Left cardiac atrium (tissue), 4 donors: ENCODE measurements at regions of chr6 and their contacts with region 1.

Region 1: DNA sequence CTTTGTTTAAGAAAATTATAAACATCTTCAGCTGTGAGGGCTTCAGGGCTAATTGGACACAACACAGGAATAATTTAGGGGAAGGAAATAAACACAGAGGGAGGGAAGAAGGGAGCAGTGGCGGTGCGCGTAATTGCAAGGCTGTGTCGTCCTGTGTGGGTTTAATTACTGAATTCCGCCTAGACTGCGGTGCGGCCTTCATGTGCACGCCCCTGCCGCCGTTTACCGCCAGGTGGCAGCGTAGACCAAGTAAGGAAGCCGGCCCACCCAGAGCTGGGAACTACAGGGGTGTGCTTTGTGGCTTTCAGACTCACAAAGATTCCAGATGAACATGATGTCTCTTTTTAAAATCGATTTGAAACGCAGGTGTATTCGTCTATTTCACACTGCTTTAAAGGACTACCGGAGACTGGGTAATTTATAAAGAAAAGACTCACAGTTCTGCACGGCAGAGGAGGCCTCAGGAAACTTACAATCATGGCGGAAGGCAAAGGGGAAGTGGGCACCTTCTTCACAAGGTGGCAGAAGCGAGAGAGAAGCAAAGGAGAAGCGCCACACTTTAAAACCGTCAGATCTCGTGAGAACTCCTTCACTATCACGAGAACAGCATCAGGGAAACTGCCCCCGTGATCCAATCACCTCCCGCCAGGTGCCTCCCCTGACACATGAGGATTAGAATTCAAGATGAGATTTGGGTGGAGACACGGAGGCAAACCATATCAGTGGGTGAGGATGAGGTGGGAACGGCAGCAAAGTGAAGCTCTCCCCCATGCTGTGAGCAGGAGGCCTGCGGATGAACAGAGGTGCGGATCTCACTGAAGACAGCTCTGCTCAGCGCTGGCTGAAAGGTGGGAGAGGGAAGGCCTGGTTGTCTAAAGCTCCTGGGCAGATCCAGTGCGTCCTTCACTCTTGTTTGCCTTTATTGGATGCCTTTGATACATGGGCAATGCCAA is 222.0 kb upstream of the PDE10A start:
- DNase-seq: peak; percentile 84
- ATAC-seq: peak; percentile 86 to 94

Region 2: GRCh38 chr6:165819394-165819793 is 65.7 kb before region 1 on chr6:
- intact Hi-C with region 1: no loop called
- DNase-seq: no peak
- ATAC-seq: peak in 1 of 2 donors; percentile 62

Region 3: GRCh38 chr6:165987483-165988301 is 102.6 kb after region 1 on chr6:
- intact Hi-C with region 1: loop called in 1 of 2 experiments (anchors 10 kb)
- DNase-seq: peak; percentile 90
- ATAC-seq: peak; percentile 88 to 90

Region 4: DNA sequence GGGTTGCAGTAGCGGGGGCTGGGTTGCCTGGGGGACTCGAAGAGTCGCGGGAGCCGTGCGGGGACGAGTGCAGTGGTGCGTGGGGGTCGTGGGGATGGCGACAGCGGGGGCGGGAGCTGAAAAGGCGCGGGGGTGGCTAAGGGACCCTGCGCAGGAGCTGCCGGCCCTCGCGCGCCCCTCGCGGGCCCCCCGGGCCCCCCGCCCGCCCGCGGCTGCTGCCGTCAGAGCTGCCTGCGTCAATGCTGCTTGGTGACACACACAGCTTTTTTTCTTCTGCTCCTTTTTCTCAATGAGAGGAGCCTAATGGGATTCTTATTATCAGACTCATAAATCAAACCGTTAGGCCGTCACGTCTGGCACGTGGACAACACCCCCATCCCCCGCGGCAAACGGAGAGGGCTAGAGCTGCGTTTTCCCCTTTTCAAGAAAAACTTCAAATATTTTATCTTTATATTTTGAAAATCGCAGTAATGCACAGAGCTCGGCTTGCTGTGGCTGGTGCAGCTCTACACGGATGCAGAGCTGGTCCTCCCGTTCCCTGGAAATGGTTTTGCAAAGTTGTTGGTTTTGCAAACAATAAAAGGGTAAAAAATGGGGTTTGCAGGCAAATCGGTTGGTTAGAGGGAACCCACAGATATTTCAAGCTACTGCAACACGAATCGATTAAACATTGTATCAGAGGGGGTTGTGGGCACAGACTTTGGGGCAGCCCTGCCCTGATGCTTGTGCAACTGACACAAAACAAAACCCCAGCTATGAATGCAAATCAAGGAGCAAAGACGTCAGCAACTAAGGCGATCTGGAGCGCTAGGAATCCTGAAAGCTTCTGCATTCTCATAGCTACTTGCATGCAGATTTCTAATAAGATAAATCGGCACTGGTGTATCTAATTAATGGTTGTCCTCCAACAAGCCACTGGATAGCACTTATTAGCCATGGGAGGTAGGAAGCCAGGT is 121.1 kb after region 1 on chr6:
- intact Hi-C with region 1: loop called in 1 of 2 experiments (anchors 5 kb)
- DNase-seq: peak; percentile 73
- ATAC-seq: peak; percentile 72 to 84

Region 5: GRCh38 chr6:166105341-166106075 is 220.4 kb after region 1 on chr6:
- intact Hi-C with region 1: loop called (anchors 2 kb)
- DNase-seq: no peak
- ATAC-seq: no peak

Region 6: DNA sequence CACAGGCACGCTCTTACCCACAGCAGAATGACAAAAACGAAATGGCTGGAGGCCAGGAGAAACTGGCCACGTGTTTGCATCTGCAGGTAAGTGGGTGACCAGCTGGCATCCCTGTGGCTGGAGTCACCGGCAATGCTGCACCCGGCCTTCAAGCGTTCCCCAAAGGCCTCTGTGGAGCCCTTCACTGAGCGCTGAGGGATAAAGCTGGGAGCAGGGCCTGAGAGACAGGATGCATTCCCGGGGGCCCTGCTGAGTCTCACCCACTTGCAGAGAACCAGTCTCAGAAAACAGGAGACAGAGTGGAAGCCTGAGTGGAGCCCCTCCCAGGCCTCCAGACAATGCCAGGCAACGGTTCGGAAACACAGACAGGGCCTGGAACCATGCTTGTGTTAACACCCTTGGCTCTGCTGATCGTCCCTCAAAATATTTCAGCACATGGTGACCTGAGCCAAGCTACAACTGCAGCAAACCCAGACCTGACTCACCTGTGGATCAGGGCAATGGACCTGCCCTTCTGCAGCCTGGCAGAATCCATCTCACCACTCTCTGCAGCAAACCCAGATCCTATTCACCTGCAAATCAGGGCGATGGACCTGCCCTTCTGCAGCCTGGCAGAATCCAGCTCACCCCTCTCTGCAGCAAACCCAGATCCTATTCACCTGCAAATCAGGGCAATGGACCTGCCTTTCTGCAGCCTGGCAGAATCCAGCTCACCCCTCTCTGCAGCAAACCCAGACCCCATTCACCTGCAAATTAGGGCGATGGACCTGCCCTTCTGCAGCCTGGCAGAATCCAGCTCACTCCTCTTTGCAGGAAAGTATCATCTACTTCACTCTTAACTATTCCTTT is 242.8 kb after region 1 on chr6:
- intact Hi-C with region 1: no loop called
- DNase-seq: no peak
- ATAC-seq: no peak